ENCODE measurements at regions of chr20 and their contacts with region 1.

Region 1: DNA sequence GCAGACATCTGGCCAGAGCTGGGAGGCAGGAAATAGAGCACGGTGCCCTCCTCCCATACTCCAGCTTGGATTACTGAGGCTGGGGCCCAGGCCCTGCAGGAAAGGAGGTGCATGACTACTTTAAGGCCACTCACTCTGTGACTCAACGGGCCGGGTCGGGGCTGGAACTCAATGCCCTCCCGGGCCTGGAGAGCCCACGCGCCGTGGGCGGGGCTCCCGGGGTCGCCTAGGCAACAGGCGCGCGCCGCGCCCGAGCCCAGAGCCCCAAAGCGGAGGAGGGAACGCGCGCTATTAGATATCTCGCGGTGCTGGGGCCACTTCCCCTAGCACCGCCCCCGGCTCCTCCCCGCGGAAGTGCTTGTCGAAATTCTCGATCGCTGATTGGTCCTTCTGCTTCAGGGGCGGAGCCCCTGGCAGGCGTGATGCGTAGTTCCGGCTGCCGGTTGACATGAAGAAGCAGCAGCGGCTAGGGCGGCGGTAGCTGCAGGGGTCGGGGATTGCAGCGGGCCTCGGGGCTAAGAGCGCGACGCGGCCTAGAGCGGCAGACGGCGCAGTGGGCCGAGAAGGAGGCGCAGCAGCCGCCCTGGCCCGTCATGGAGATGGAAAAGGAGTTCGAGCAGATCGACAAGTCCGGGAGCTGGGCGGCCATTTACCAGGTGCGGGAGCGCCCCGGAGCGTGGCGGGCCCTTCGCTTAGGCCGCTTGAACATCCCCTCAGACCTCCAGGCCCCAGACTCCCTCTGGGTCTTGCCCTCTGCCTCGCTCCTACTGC is at the start of gene PTPN1:
- DNase-seq: peak; percentile 97 to 100 (median 99)
- ATAC-seq: peak; percentile 98
- H3K4me3 ChIP-seq: peak within 1 kb of the TSS; percentile 88
- H3K4me3 Mint-ChIP-seq: peak within 1 kb of the TSS; percentile 93 to 100 (median 97)
- H3K27ac ChIP-seq: peak within 1 kb of the TSS; percentile 89
- H3K27ac Mint-ChIP-seq: peak within 1 kb of the TSS; percentile 93 to 98 (median 98)
- H3K4me1 ChIP-seq: peaks cover 32 to 38% of the 10 kb centered on the region in 2 donors
- H3K4me1 Mint-ChIP-seq: peaks cover 36 to 52% (median 46%) of the 10 kb centered on the region in 7 donors
- H3K27me3 ChIP-seq: no peaks in the 10 kb centered on the region
- H3K27me3 Mint-ChIP-seq: no peaks in the 10 kb centered on the region
- total RNA-seq, gene PTPN1: 53.9 to 80.5 (median 60.2) TPM

Region 2: DNA sequence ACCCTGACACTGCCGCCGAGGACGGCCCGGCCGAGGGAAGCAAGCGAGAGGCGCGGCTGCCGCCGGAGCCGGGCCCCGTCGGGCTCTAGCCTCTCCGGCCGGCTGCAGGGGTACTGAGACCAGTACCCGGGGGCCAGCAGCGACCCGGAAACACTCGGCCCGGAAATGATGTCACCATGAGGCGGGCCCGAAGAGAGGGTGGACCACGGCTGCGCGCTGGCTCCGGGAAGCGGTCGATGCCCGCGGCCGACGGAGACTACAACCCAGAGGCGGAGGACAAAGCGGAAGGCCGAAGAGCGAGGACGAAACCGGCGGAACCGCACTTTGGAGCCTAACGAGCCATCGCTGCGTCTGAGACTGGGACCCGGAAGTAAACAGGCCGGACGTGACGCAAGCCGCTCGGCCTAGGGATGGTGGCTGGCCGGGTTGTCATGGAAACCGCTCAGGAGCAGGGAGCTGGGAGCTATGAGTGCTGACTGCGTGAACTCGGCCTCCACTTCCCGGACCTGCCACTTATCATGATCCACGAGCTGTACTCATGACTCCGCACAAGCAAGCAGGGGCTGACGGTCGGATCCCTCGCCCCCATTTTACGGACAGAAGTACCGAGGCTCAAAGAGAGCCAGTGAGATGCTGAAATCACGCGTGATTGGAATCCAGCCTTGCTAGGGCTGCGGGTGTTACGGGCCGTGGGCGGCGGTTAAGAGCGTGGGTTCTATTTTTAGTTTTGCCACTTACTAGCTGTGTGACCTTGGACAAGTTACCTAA is 594.6 kb before region 1 on chr20 and contains the start of gene SPATA2:
- CTCF ChIA-PET with region 1: no interaction called
- POLR2A ChIA-PET with region 1: no interaction called
- intact Hi-C with region 1: loop called in 1 of 2 experiments (anchors 1 kb)
- DNase-seq: peak; percentile 87 to 99 (median 93)
- ATAC-seq: peak; percentile 88
- H3K4me3 ChIP-seq: peak within 1 kb of the TSS; percentile 93
- H3K4me3 Mint-ChIP-seq: peak within 1 kb of the TSS; percentile 96 to 99 (median 97)
- H3K27ac ChIP-seq: peak within 1 kb of the TSS; percentile 100
- H3K27ac Mint-ChIP-seq: peak within 1 kb of the TSS; percentile 97 to 100 (median 99)
- H3K4me1 ChIP-seq: peaks cover 11 to 16% of the 10 kb centered on the region in 2 donors
- H3K4me1 Mint-ChIP-seq: peaks cover 25 to 48% (median 36%) of the 10 kb centered on the region in 7 donors
- H3K27me3 ChIP-seq: no peaks in the 10 kb centered on the region
- H3K27me3 Mint-ChIP-seq: no peaks in the 10 kb centered on the region
- total RNA-seq, gene SPATA2: 9.0 to 18.4 (median 10.0) TPM

Region 3: GRCh38 chr20:50153485-50154377 is 356.4 kb before region 1 on chr20 and contains the start of gene PEDS1:
- CTCF ChIA-PET with region 1: no interaction called
- POLR2A ChIA-PET with region 1: interaction called, 3 read pairs
- intact Hi-C with region 1: loop called in 1 of 2 experiments (anchors 1 kb)
- DNase-seq: peak; percentile 72 to 89 (median 81)
- ATAC-seq: peak; percentile 99
- H3K4me3 ChIP-seq: peak within 1 kb of the TSS; percentile 91
- H3K4me3 Mint-ChIP-seq: peak within 1 kb of the TSS; percentile 81 to 93 (median 89)
- H3K27ac ChIP-seq: peak within 1 kb of the TSS; percentile 93
- H3K27ac Mint-ChIP-seq: peak within 1 kb of the TSS; percentile 87 to 98 (median 93)
- H3K4me1 ChIP-seq: peaks cover 22 to 24% of the 10 kb centered on the region in 2 donors
- H3K4me1 Mint-ChIP-seq: peaks cover 38 to 50% (median 43%) of the 10 kb centered on the region in 7 donors
- H3K27me3 ChIP-seq: no peaks in the 10 kb centered on the region
- H3K27me3 Mint-ChIP-seq: no peaks in the 10 kb centered on the region
- total RNA-seq, gene PEDS1: 16.0 to 27.6 (median 20.8) TPM

Region 4: GRCh38 chr20:50484276-50484976 is 25.7 kb before region 1 on chr20:
- CTCF ChIA-PET with region 1: interaction called, 6 read pairs
- POLR2A ChIA-PET with region 1: interaction called, 12 read pairs
- intact Hi-C with region 1: loop called (anchors 1 to 2 kb)
- DNase-seq: no peak
- ATAC-seq: no peak
- H3K4me3 ChIP-seq: peak overlapping the region; percentile 77
- H3K4me3 Mint-ChIP-seq: peak overlapping the region; percentile 82 to 99 (median 93)
- H3K27ac ChIP-seq: peak overlapping the region; percentile 91
- H3K27ac Mint-ChIP-seq: peak overlapping the region; percentile 92 to 99 (median 96)
- H3K4me1 ChIP-seq: peaks cover 6 to 17% of the 10 kb centered on the region in 2 donors
- H3K4me1 Mint-ChIP-seq: peaks cover 20 to 38% (median 24%) of the 10 kb centered on the region in 7 donors
- H3K27me3 ChIP-seq: no peaks in the 10 kb centered on the region
- H3K27me3 Mint-ChIP-seq: no peaks in the 10 kb centered on the region

Region 5: GRCh38 chr20:50546729-50547314 is 36.7 kb after region 1 on chr20:
- CTCF ChIA-PET with region 1: interaction called, 3 read pairs
- POLR2A ChIA-PET with region 1: interaction called, 17 read pairs
- intact Hi-C with region 1: loop called (anchors 1 to 2 kb)
- DNase-seq: peak in 1 of 9 donors; percentile 7
- ATAC-seq: peak; percentile 64
- H3K4me3 ChIP-seq: no peak overlapping the region
- H3K4me3 Mint-ChIP-seq: peak overlapping the region; percentile 55 to 87 (median 72)
- H3K27ac ChIP-seq: peak overlapping the region; percentile 20
- H3K27ac Mint-ChIP-seq: peak overlapping the region; percentile 16 to 90 (median 86)
- H3K4me1 ChIP-seq: peaks cover 28 to 34% of the 10 kb centered on the region in 2 donors
- H3K4me1 Mint-ChIP-seq: peaks cover 59 to 76% (median 71%) of the 10 kb centered on the region in 7 donors
- H3K27me3 ChIP-seq: no peaks in the 10 kb centered on the region
- H3K27me3 Mint-ChIP-seq: no peaks in the 10 kb centered on the region

Region 6: DNA sequence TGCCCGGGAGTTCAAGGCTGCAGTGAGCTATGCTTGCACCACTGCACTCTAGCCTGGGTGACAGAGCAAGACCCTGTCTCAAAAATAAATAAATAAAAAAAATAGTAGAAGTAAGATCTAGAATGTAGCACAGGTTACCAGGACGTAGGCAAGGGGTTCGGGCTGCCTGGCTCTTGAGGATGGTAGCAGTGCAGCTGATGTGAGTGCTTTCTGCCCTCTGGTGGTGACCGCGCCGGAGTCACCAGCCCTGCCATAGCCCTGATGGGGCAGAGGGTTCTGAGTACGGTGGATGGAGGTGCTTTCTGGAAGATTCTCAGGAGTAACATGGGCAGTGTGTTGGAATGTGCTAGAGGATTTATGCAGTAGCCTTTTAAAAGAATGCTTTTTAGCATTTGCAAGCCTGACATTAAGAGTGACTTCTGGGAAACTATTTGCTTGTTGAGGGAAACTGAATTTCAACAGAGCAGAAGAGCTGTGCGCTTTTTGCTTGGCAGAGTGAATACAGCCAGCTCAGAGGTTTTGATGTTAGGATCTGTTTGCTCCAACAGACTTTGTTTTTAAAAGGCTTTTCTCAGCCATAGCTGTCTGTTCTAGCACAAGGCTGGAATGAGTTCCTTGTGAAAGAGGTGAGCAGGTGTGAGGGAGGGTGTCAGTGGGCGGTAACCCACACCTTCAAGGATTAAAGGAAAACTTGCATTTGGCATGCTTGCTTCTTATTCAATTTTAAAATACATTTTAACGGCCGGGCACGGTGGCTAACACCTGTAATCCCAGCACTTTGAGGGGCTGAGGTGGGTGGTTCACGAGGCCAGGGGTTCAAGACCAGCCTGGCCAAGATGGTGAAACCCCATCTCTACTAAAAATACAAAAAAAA is 66.0 kb after region 1 on chr20:
- CTCF ChIA-PET with region 1: interaction called, 67 read pairs
- POLR2A ChIA-PET with region 1: interaction called, 45 read pairs
- intact Hi-C with region 1: loop called in 1 of 2 experiments (anchors 2 kb)
- DNase-seq: peak; percentile 34 to 67 (median 58)
- ATAC-seq: peak; percentile 92
- H3K4me3 ChIP-seq: no peak overlapping the region
- H3K4me3 Mint-ChIP-seq: no peak overlapping the region
- H3K27ac ChIP-seq: no peak overlapping the region
- H3K27ac Mint-ChIP-seq: peak overlapping the region in 8 of 9 donors; percentile 12 to 77 (median 56)
- H3K4me1 ChIP-seq: peaks cover 0 to 1% of the 10 kb centered on the region in 2 donors
- H3K4me1 Mint-ChIP-seq: peaks cover 12 to 40% (median 31%) of the 10 kb centered on the region in 7 donors
- H3K27me3 ChIP-seq: no peaks in the 10 kb centered on the region
- H3K27me3 Mint-ChIP-seq: no peaks in the 10 kb centered on the region

Region 7: GRCh38 chr20:50929299-50930138 is 419.4 kb after region 1 on chr20:
- CTCF ChIA-PET with region 1: no interaction called
- POLR2A ChIA-PET with region 1: no interaction called
- intact Hi-C with region 1: loop called in 1 of 2 experiments (anchors 2 kb)
- DNase-seq: peak; percentile 74 to 95 (median 93)
- ATAC-seq: peak; percentile 84
- H3K4me3 ChIP-seq: peak overlapping the region; percentile 52
- H3K4me3 Mint-ChIP-seq: peak overlapping the region; percentile 88 to 98 (median 94)
- H3K27ac ChIP-seq: peak overlapping the region; percentile 63
- H3K27ac Mint-ChIP-seq: peak overlapping the region; percentile 85 to 99 (median 96)
- H3K4me1 ChIP-seq: peaks cover 37 to 38% of the 10 kb centered on the region in 2 donors
- H3K4me1 Mint-ChIP-seq: peaks cover 37 to 62% (median 57%) of the 10 kb centered on the region in 7 donors
- H3K27me3 ChIP-seq: no peaks in the 10 kb centered on the region
- H3K27me3 Mint-ChIP-seq: no peaks in the 10 kb centered on the region